Motor neuron (in vitro differentiated cells): ENCODE measurements at regions of chr12 and their contacts with region 1.

Region 1: DNA sequence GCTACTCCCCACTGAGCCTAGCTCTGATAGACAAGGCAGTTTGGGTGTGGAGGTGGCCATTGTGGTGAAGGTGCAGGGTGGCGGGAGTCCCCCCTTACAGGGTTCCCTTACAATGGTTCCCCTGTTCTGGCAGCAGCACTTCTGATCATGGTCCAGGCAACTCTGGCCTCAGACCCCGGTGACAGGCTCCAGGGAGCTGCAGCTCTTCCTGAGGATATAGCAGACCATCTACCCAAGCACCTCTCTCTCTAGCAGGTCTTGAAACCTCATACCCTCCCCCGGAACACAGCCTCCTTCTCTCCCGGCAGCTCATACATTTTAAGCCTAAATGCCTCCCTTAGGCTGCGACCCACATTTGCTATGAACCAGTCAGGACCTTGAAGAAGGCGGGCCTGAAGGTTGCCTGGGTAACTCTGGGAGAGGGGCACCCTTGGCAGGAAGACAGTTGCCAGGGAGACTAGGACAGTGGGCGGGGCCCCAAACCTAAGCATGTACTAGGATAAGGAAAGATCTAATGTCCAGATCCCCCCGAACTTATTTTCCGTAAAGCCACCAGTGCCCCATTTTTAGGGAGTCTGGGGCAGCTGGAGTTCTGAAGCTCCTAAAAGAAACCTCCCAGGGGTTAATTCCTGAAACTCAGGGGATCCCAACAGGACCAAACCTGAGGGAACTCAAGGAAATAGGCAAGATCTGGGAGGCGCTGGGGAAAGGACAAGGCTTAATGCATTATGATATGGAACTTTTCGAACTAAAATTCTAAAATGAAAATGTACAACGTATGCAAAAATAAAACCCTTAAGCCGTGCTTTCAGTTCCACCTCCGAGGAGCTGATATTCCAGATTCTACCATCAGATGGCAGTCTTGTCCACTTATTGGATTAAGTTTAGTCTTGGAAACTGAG is 4.5 kb upstream of the GDF11 start:
- ATAC-seq: peak; percentile 34 to 82 (median 76)
- H3K4me3 ChIP-seq: peak overlapping the region; percentile 33 to 54 (median 37)
- H3K27ac ChIP-seq: peak overlapping the region; percentile 76 to 84
- H3K4me1 ChIP-seq: peaks cover 6 to 19% of the 10 kb centered on the region in 2 donors

Region 2: DNA sequence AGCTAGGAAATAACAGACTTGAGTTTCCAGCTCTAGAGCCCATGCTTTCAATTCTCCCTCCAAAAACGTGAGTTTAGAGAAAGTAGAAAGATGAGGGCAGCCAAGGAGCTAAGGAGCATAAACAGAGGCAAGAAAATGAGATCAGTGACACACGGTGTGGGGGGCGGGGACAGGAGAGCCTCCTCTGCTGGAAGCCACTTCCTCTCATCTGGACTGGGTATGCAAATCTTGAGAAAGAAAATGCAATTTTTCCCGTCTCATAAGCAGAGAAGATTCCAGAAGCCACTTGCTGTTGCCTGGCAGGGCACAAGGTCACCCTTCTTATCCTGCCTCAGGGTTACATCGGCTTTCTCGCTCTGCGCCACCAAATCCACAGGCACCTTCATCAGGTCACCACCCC is 95.7 kb before region 1 on chr12:
- in situ Hi-C with region 1: no loop called
- ATAC-seq: peak in 1 of 8 experiments; percentile 44
- H3K4me3 ChIP-seq: no peak overlapping the region
- H3K27ac ChIP-seq: no peak overlapping the region
- H3K4me1 ChIP-seq: no peaks in the 10 kb centered on the region

Region 3: GRCh38 chr12:55797068-55797467 is 58.7 kb after region 1 on chr12:
- in situ Hi-C with region 1: loop called in 1 of 9 experiments (anchors 10 kb)
- ATAC-seq: peak in 3 of 8 experiments; percentile 36 to 44 (median 44)
- H3K4me3 ChIP-seq: no peak overlapping the region
- H3K27ac ChIP-seq: no peak overlapping the region
- H3K4me1 ChIP-seq: no peaks in the 10 kb centered on the region

Region 4: GRCh38 chr12:55926738-55927587 is 188.6 kb after region 1 on chr12:
- in situ Hi-C with region 1: loop called in 3 of 9 experiments (anchors 25 kb)
- ATAC-seq: peak; percentile 39 to 88 (median 80)
- H3K4me3 ChIP-seq: peak overlapping the region; percentile 65 to 97 (median 88)
- H3K27ac ChIP-seq: peak overlapping the region; percentile 97
- H3K4me1 ChIP-seq: peaks cover 20 to 23% of the 10 kb centered on the region in 2 donors

Region 5: GRCh38 chr12:55940065-55940732 is 201.8 kb after region 1 on chr12:
- in situ Hi-C with region 1: loop called in 4 of 9 experiments (anchors 10 to 25 kb)
- ATAC-seq: peak; percentile 94 to 100 (median 99)
- H3K4me3 ChIP-seq: peak overlapping the region in 1 of 5 donors; percentile 1
- H3K27ac ChIP-seq: no peak overlapping the region
- H3K4me1 ChIP-seq: peaks cover 0 to 4% of the 10 kb centered on the region in 2 donors

Region 6: DNA sequence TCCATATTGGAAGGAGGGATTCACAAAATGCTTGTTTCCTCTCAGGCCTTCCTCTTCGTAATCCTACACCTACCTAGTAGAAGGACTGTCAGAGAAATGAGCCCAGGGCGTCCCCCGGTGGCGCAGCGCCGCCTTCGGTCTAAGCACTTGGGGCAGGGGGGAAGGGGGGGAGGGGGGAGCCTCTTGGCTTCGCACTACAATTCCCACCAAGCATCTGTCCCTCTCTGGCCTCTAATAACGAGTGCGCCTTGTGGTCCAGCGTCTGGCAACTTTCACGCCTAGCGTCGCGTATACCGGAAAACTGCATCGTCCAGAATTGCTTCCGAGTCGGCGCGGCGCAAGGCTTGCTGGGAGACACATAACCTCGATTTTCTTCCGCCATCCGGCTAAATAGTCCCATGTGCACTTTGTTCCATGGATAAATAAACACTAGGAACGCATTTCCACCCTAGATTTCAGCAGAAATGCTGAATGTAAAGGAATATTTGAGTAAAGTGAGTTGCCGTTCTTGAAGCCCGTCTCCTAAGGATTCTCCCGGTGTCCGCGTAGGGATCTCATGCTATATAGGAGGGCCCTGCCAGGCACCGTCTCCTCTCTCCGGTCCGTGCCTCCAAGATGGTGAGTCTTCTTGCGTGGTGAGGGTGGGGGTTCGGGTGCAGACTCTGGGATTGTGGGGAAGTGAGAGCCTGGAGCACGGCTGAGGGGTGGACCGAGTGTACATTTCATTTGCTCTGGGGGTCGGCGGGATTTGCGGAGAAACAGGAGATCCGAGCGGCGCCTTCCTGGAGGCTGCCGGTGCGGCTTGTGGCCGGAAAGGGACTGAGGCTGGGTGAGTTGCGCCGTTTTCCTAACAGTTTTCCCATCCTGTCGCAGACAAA is 303.4 kb after region 1 on chr12 and contains the start of gene RPS26:
- in situ Hi-C with region 1: loop called in 2 of 9 experiments (anchors 25 kb)
- ATAC-seq: peak; percentile 89 to 97 (median 96)
- H3K4me3 ChIP-seq: peak within 1 kb of the TSS; percentile 63 to 99 (median 83)
- H3K27ac ChIP-seq: peak within 1 kb of the TSS; percentile 98 to 99
- H3K4me1 ChIP-seq: peaks cover 10 to 14% of the 10 kb centered on the region in 2 donors
- total RNA-seq, gene RPS26: 282 to 1,536 (median 616) TPM

Region 7: GRCh38 chr12:56258057-56258819 is 519.9 kb after region 1 on chr12 and contains the start of gene ANKRD52:
- in situ Hi-C with region 1: no loop called
- ATAC-seq: peak; percentile 76 to 96 (median 94)
- H3K4me3 ChIP-seq: peak within 1 kb of the TSS; percentile 66 to 98 (median 87)
- H3K27ac ChIP-seq: peak within 1 kb of the TSS; percentile 86 to 87
- H3K4me1 ChIP-seq: peaks cover 16 to 18% of the 10 kb centered on the region in 2 donors
- total RNA-seq, gene ANKRD52: 5.3 to 30.7 (median 12.0) TPM